CD8-positive, alpha-beta T cell (primary cell): ENCODE measurements at regions of chr13 and their contacts with region 1.

Region 1: DNA sequence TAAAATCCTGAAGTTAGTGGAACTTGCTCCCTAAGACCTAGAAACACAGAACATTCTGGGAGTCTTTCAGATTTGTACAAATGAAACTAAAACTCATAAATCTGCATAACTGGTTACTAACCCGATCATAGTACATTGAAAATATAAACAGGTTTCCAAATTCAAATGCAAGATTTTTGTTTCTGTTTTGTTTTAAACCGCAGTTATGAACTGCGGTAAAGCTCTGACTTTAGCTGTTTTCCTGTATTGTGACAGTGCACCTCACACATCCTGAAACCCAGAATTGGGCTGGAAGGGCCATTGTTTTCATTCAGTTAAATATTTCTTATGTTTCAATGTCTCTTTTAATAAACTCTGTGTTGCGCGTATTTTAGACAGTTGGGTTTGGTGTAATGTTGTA is 204.7 kb downstream of the SHISA2 start:
- DNase-seq: peak in 2 of 9 experiments; percentile 41 to 70
- ATAC-seq: peak; percentile 84
- H3K4me3 ChIP-seq: peak overlapping the region in 1 of 2 experiments; percentile 5
- H3K4me3 Mint-ChIP-seq: peak overlapping the region; percentile 68
- H3K27ac ChIP-seq: peak overlapping the region in 1 of 2 experiments; percentile 44
- H3K27ac Mint-ChIP-seq: peak overlapping the region; percentile 85
- H3K4me1 ChIP-seq: peaks cover 16% of the 10 kb centered on the region
- H3K4me1 Mint-ChIP-seq: peaks cover 34% of the 10 kb centered on the region
- H3K27me3 ChIP-seq: no peaks in the 10 kb centered on the region
- H3K27me3 Mint-ChIP-seq: peaks cover 2% of the 10 kb centered on the region
- CTCF ChIP-seq: no peak

Region 2: DNA sequence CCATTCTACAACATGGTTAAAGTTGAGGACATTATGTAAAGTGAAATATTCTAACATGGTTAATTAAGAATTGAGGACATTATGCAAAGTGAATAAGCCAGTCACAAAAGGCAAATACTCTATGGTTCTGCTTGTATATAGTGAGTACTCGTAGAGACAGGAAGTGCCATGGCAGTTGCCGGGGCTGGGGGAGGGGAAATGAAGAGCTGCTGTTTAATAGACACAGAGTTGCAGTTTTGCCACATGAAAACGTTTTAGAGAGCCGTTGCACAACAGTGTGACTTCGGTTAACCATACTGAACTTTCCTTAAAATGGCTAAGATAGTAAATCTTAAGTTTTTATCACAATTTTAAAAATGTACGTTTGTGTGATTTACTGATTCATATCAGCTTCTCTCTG is 27.8 kb after region 1 on chr13:
- CTCF ChIA-PET with region 1: no interaction called
- POLR2A ChIA-PET with region 1: no interaction called
- intact Hi-C with region 1: loop called (anchors 2 to 5 kb)
- DNase-seq: peak; percentile 35 to 82 (median 66)
- ATAC-seq: peak; percentile 91
- H3K4me3 ChIP-seq: peak overlapping the region in 1 of 2 experiments; percentile 3
- H3K4me3 Mint-ChIP-seq: peak overlapping the region; percentile 30
- H3K27ac ChIP-seq: peak overlapping the region; percentile 15 to 60
- H3K27ac Mint-ChIP-seq: peak overlapping the region; percentile 83
- H3K4me1 ChIP-seq: peaks cover 53% of the 10 kb centered on the region
- H3K4me1 Mint-ChIP-seq: peaks cover 81% of the 10 kb centered on the region
- H3K27me3 ChIP-seq: no peaks in the 10 kb centered on the region
- H3K27me3 Mint-ChIP-seq: no peaks in the 10 kb centered on the region
- CTCF ChIP-seq: no peak

Region 3: GRCh38 chr13:25881971-25882451 is 34.9 kb after region 1 on chr13:
- CTCF ChIA-PET with region 1: no interaction called
- POLR2A ChIA-PET with region 1: no interaction called
- intact Hi-C with region 1: loop called in 1 of 2 experiments (anchors 5 kb)
- DNase-seq: no peak
- ATAC-seq: no peak
- H3K4me3 ChIP-seq: no peak overlapping the region
- H3K4me3 Mint-ChIP-seq: no peak overlapping the region
- H3K27ac ChIP-seq: no peak overlapping the region
- H3K27ac Mint-ChIP-seq: no peak overlapping the region
- H3K4me1 ChIP-seq: peaks cover 52% of the 10 kb centered on the region
- H3K4me1 Mint-ChIP-seq: peaks cover 74% of the 10 kb centered on the region
- H3K27me3 ChIP-seq: no peaks in the 10 kb centered on the region
- H3K27me3 Mint-ChIP-seq: no peaks in the 10 kb centered on the region
- CTCF ChIP-seq: no peak

Region 4: DNA sequence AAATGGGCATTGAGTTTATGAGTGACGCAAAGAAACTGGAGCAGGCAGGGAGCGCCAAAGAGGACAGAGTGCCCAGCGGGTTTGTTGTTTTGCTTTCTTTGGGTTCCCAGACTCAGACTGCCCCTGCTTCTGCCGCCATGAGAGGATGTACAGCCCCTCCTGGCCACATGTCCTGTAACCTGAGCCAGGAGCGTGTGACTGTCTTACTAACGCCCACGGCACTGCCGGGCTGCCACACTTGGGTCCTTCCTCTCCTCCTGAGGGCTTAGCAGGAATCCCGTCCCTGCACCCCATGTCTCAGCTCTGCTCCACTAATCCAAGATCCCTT is 832.9 kb after region 1 on chr13:
- CTCF ChIA-PET with region 1: no interaction called
- POLR2A ChIA-PET with region 1: no interaction called
- intact Hi-C with region 1: no loop called
- DNase-seq: no peak
- ATAC-seq: no peak
- H3K4me3 ChIP-seq: no peak overlapping the region
- H3K4me3 Mint-ChIP-seq: no peak overlapping the region
- H3K27ac ChIP-seq: no peak overlapping the region
- H3K27ac Mint-ChIP-seq: no peak overlapping the region
- H3K4me1 ChIP-seq: no peaks in the 10 kb centered on the region
- H3K4me1 Mint-ChIP-seq: no peaks in the 10 kb centered on the region
- H3K27me3 ChIP-seq: no peaks in the 10 kb centered on the region
- H3K27me3 Mint-ChIP-seq: peaks cover 19% of the 10 kb centered on the region
- CTCF ChIP-seq: no peak